H1 (cell line): ENCODE measurements at regions of chr12 and their contacts with region 1.

Region 1: DNA sequence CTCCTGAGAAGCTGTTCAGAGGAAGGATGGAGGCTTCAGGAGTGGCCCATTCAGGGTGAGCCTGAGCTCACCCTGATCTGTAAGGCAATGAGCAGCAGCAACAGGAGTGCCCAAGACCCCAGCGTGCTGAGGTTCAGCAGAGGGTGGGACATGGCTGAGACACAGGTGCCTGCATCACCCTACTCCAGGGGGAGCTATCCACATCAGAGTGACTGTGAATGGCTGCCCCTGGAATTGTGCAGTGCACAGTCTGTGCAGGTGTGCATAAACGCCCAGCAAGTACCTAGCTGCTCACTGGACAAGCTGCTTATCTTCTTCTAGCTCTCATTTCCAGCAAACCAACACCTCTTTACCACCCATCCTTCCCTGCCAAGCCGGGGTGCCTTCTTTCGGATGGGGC is 140.6 kb upstream of the PRMT8 start:
- DNase-seq: no peak
- H3K4me3 ChIP-seq: no peak overlapping the region
- H3K27ac ChIP-seq: no peak overlapping the region
- H3K4me1 ChIP-seq: no peaks in the 10 kb centered on the region; a peak in 1 of 7 replicates
- H3K27me3 ChIP-seq: no peaks in the 10 kb centered on the region
- CTCF ChIP-seq: peak in 1 of 3 experiments; percentile 13; a peak in 1 of 4 replicates
- EP300 ChIP-seq: no peak
- POLR2A ChIP-seq: no peak
- RAD21 ChIP-seq: no peak

Region 2: GRCh38 chr12:3326156-3326849 is 24.1 kb before region 1 on chr12:
- CTCF ChIA-PET with region 1: interaction called, 13 read pairs
- POLR2A ChIA-PET with region 1: no interaction called
- DNase-seq: no peak
- H3K4me3 ChIP-seq: no peak overlapping the region
- H3K27ac ChIP-seq: no peak overlapping the region
- H3K4me1 ChIP-seq: no peaks in the 10 kb centered on the region; a peak in 1 of 7 replicates
- H3K27me3 ChIP-seq: no peaks in the 10 kb centered on the region
- CTCF ChIP-seq: peak; percentile 69 to 82 (median 70)
- EP300 ChIP-seq: no peak
- POLR2A ChIP-seq: no peak
- RAD21 ChIP-seq: peak; percentile 57 to 68

Region 3: DNA sequence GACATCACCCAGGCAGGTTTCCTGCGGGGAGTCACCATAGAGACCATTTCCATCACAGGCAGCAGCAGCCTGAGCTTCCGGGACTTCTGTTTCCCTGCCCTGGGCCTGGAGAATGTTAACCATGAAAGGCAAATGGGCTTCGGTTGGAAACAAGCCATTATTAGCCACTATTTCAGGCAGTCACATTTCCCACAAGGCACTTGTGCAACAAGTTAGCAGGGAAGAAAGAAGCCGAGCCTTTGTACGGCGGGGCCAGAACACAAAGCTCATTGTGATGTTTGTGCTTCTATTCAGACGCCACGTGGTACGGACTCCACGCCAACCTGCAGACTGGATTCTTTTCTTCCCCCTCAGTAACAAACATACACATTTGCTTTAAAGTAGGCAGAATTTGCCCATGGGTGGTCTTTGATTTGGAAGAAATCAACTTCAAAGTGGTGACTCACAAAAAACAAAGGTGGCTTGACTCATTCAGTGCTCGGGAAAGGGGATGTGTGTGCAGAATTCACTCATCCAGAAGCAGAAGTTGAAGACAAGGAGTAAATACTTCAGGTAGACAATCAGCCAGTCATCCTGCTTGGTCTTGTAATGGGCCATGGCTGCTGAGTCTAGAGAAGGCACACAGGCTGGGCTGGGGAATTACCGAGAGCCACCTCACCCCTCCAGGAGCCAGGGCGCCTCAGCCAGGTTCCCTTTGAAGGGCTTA is 13.7 kb before region 1 on chr12:
- CTCF ChIA-PET with region 1: interaction called, 17 read pairs
- POLR2A ChIA-PET with region 1: interaction called, 3 read pairs
- DNase-seq: no peak
- H3K4me3 ChIP-seq: no peak overlapping the region
- H3K27ac ChIP-seq: no peak overlapping the region
- H3K4me1 ChIP-seq: peaks cover 4 to 19% (median 8%) of the 10 kb centered on the region in 4 experiments
- H3K27me3 ChIP-seq: peaks cover 0 to 1% (median 0%) of the 10 kb centered on the region in 4 experiments; a peak in 1 of 7 replicates
- CTCF ChIP-seq: no peak
- EP300 ChIP-seq: no peak
- POLR2A ChIP-seq: no peak
- RAD21 ChIP-seq: no peak

Region 4: DNA sequence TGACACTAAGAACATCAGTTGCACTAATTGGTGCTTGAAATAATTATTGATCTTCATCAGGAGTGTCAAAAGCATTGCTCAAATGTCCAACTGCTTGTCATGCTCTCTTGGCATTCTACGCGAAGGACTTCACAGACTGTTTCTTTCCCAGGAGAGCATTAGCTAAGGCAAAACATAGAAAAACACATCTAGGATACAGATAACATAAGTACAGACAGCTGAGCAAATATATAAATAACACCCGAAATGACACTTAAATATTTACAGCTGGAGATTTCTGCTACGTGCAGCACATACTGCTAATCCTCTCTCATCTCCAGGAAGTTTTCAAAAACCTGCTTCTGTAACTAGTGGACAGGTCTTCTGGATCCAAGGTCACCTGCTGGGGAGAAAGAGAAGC is 20.6 kb after region 1 on chr12:
- CTCF ChIA-PET with region 1: interaction called, 10 read pairs
- POLR2A ChIA-PET with region 1: interaction called, 3 read pairs
- DNase-seq: no peak
- H3K4me3 ChIP-seq: no peak overlapping the region
- H3K27ac ChIP-seq: no peak overlapping the region
- H3K4me1 ChIP-seq: peaks cover 0 to 2% (median 0%) of the 10 kb centered on the region in 4 experiments; a peak in 1 of 7 replicates
- H3K27me3 ChIP-seq: peaks cover 5 to 19% (median 18%) of the 10 kb centered on the region in 4 experiments
- CTCF ChIP-seq: no peak
- EP300 ChIP-seq: no peak
- POLR2A ChIP-seq: no peak
- RAD21 ChIP-seq: no peak